Ovary (tissue), 10 donors: ENCODE measurements at regions of chr2 and their contacts with region 1.

Region 1: DNA sequence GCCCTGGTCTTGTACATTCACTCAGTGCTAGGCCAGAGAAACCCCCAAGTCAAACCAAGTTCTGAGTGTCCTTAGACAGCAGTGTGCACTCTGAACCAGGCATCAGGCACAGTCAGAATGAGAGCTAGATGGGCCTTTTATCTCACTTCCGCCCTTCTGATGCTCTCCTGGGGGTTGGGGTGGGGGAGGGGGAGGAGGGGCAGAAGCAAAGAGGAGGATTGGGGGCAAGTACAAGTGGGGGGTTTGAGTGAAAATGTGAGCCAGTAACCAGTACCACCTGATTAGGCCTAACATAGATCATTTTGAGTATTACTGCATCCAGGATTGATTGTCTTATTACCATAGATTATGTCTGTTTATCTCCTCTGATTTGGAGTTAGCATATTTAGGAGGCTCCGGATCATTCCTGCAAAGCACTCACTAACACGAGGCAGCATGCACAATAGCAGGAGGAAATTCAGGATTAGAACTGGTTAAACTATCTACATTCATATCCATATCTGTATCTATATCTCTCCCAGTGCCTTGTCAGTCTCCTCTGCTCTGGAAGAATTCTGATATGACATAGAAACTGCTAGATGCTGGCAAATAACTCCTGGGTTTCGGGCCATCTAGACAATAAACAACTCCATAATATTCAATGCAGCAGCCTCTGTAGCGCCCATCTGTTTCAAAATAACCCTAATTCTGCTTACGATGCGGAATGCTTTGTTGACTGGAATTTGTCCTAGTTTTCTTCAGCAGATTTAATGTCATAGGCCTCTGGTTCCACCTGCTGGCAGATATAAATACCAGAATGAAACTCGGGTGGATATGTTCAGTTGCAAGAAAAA is 149.1 kb downstream of the RHBDD1 start:
- DNase-seq: peak in 4 of 5 donors; percentile 44 to 77 (median 50)
- H3K4me3 ChIP-seq: no peak overlapping the region
- H3K27ac ChIP-seq: peak overlapping the region; percentile 23 to 64
- H3K4me1 ChIP-seq: peaks cover 23% of the 10 kb centered on the region
- H3K27me3 ChIP-seq: no peaks in the 10 kb centered on the region
- CTCF ChIP-seq: peak; percentile 65 to 89 (median 67)
- EP300 ChIP-seq: no peak
- POLR2A ChIP-seq: no peak

Region 2: GRCh38 chr2:225668606-225669266 is 1316.2 kb before region 1 on chr2:
- intact Hi-C with region 1: loop called (anchors 1 to 5 kb)
- DNase-seq: peak in 1 of 5 donors; percentile 16
- H3K4me3 ChIP-seq: no peak overlapping the region
- H3K27ac ChIP-seq: no peak overlapping the region
- H3K4me1 ChIP-seq: no peaks in the 10 kb centered on the region
- H3K27me3 ChIP-seq: no peaks in the 10 kb centered on the region
- CTCF ChIP-seq: peak; percentile 12 to 75 (median 51)
- EP300 ChIP-seq: no peak
- POLR2A ChIP-seq: no peak

Region 3: DNA sequence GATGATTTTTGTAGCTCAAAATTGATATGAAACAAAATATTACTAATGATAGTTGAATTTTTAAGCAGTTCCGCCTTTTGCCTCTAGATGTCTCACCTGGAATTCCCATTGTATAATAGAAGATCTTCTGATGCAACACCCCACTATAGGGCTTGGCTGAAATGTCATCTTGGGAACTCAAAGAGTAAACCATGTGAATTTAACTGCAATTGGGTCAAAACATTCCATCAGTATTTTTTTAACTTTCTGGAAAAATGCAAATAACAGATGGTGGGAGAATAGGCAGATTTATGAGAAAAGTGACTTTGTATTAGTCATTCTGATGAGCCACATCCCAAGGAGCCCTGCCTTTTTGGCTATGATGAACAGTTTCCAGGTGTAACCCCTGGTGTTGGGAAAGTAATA is 1095.5 kb before region 1 on chr2:
- intact Hi-C with region 1: loop called in 2 of 4 experiments (anchors 5 to 10 kb)
- DNase-seq: no peak
- H3K4me3 ChIP-seq: no peak overlapping the region
- H3K27ac ChIP-seq: no peak overlapping the region
- H3K4me1 ChIP-seq: peaks cover under 1% of the 10 kb centered on the region
- H3K27me3 ChIP-seq: no peaks in the 10 kb centered on the region
- CTCF ChIP-seq: peak; percentile 50 to 87 (median 82)
- EP300 ChIP-seq: no peak
- POLR2A ChIP-seq: no peak

Region 4: GRCh38 chr2:226835796-226836547 is 149.0 kb before region 1 on chr2 and contains the start of gene RHBDD1:
- intact Hi-C with region 1: loop called in 3 of 4 experiments (anchors 10 kb)
- DNase-seq: peak; percentile 92 to 96 (median 93)
- H3K4me3 ChIP-seq: peak within 1 kb of the TSS; percentile 85
- H3K27ac ChIP-seq: peak within 1 kb of the TSS; percentile 90 to 95
- H3K4me1 ChIP-seq: no peaks in the 10 kb centered on the region
- H3K27me3 ChIP-seq: no peaks in the 10 kb centered on the region
- CTCF ChIP-seq: no peak
- EP300 ChIP-seq: no peak
- POLR2A ChIP-seq: peak; percentile 84
- total RNA-seq, gene RHBDD1: 18.5 to 95.8 (median 62.4) TPM